PC-3 (cell line): ENCODE measurements at regions of chr10 and their contacts with region 1.

Region 1: DNA sequence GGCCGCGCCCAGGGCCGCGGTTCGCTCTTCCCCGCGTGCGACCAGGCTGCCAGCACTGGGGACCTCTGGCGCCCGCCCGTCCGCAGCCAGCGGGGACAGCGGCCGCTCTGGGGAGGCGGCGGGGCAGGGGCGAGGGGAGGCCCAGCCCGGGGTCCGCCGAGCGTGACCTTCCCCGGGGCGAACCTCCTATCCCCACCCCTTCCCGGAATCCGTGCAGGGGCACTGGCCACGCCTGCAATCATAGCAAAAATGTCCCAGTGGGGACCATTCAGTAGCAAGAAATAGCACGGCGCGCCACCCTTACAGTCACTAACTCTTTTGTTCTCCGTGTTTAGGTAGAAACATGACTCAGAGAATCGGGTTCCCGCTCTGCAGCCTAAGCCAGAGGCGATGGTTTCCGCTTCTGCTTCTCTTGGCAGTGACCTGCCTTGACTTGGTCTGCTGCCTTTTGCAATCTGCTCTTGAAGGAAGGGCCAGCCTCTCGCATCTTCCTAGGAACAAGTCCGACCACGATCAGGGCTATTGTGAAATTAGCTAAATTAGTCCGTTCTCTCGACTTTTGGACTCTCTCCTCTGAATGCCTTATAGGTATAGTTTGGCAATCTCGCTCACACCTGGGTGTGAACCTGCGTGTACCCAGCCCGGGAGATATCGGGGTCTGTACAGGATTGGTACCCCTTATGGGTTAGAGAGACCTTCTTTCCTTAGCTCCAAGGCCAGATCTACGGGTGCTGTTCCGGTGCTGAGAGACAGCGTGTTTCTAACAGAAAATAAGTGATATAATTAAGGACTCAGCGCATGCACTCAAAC is 79.4 kb upstream of the ACBD5 start:
- DNase-seq: no peak
- ATAC-seq: no peak
- H3K4me3 ChIP-seq: no peak overlapping the region
- H3K27ac ChIP-seq: no peak overlapping the region
- H3K4me1 ChIP-seq: no peaks in the 10 kb centered on the region
- H3K27me3 ChIP-seq: no peaks in the 10 kb centered on the region
- CTCF ChIP-seq: no peak

Region 2: DNA sequence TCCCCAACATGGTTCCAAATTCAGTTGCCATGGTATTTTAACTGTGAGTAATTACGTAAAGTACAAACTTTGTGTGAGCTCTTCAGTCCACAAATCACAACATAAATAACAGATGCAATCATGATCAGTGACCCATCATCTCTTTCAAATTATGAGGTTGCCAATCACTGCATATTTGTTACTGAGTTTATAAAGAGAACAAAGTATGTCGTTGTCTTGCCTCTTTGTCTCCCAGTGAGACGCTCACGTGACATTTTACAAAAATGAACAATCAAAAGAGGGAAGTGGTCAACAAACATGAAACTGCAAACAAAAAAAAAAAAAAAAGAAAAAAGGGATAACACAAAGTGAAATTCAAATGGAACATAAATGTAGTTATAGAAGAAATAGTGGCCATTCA is 745.2 kb before region 1 on chr10:
- CTCF ChIA-PET with region 1: no interaction called
- POLR2A ChIA-PET with region 1: no interaction called
- intact Hi-C with region 1: loop called (anchors 5 kb)
- DNase-seq: no peak
- ATAC-seq: no peak
- H3K4me3 ChIP-seq: no peak overlapping the region
- H3K27ac ChIP-seq: no peak overlapping the region
- H3K4me1 ChIP-seq: no peaks in the 10 kb centered on the region
- H3K27me3 ChIP-seq: peaks cover 16% of the 10 kb centered on the region
- CTCF ChIP-seq: no peak